K562 (cell line): ENCODE measurements at regions of chr15 and their contacts with region 1.

Region 1: GRCh38 chr15:90994417-90995311 is at the start of gene PRC1:
- DNase-seq: peak; percentile 98 to 99 (median 98)
- ATAC-seq: peak; percentile 94
- H3K4me3 ChIP-seq: peak within 1 kb of the TSS; percentile 91
- H3K27ac ChIP-seq: peak within 1 kb of the TSS; percentile 99
- H3K4me1 ChIP-seq: peaks cover 12 to 24% of the 10 kb centered on the region in 2 experiments; a peak in 3 of 5 replicates
- H3K27me3 ChIP-seq: no peaks in the 10 kb centered on the region
- CTCF ChIP-seq: peak in 1 of 3 experiments; percentile 5; a peak in 1 of 6 replicates
- EP300 ChIP-seq: no peak
- POLR2A ChIP-seq: peak; percentile 94
- RAD21 ChIP-seq: no peak
- polyA plus RNA-seq, gene PRC1: 156 to 240 TPM

Region 2: DNA sequence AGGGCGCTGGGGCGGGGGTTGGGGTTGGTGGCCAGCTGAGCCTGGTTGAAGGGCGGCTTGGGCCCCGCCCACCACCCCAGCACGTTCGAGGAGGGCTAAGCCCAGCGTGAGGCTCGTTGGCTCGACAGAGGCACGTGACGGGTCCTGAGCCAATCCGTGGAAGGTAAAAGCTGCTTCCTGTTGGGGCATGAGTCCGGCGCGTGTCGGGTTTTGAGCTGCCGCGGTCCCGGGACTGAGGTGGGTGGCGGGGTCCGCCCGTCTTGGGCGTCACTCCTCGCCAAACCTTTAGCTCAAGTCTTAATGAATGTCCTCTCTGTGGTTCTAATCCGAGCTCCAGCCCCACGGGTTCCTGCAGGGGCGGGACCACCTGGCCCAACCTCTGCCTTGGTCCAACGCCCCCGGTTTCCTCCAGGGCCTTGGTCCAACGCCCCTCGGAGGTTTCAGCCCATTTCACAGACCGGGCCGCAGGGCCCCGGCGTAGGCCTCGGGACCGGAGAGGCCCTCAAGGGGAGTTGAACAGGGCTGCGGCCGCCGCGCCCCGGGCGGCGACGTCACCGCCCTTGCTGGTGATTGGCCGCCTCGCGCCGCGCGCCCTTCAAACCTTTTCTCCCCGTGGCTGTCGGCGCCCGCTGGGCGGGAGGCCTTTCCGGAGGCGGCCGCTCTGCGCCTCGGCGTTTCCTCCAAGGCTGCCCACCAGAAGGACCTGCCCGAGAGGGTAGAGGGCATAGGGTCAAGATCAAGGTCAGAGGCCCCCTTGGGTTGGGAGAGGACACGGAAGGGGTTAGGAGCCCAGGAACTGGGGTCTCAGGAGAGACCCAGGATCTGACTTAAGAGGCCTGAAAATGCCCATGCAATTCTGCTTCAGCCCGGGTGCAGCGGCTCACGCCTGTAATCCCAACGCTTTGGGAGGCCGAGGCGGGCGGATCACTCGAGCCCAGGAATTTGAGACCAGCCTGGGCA is 39.7 kb before region 1 on chr15 and contains the start of gene RCCD1:
- CTCF ChIA-PET with region 1: no interaction called
- POLR2A ChIA-PET with region 1: interaction called, 4 read pairs
- in situ Hi-C with region 1: no loop called
- intact Hi-C with region 1: loop called (anchors 5 kb)
- DNase-seq: peak; percentile 97 to 98 (median 98)
- ATAC-seq: peak; percentile 96
- H3K4me3 ChIP-seq: peak within 1 kb of the TSS; percentile 50
- H3K27ac ChIP-seq: peak within 1 kb of the TSS; percentile 95
- H3K4me1 ChIP-seq: peaks cover 9 to 48% of the 10 kb centered on the region in 2 experiments; a peak in 4 of 5 replicates
- H3K27me3 ChIP-seq: no peaks in the 10 kb centered on the region
- CTCF ChIP-seq: no peak
- EP300 ChIP-seq: peak; percentile 21; the same call in 1 of the 2 replicates
- POLR2A ChIP-seq: peak; percentile 93
- RAD21 ChIP-seq: 0 out of 4 replicates have a peak, but pooled peaks of 1 of the 2 experiments have one; percentile 6
- polyA plus RNA-seq, gene RCCD1: 11.1 to 12.2 TPM

Region 3: GRCh38 chr15:91007266-91007665 is 12.6 kb after region 1 on chr15:
- CTCF ChIA-PET with region 1: no interaction called
- POLR2A ChIA-PET with region 1: interaction called, 15 read pairs
- in situ Hi-C with region 1: no loop called
- intact Hi-C with region 1: no loop called
- DNase-seq: no peak
- ATAC-seq: no peak
- H3K4me3 ChIP-seq: no peak overlapping the region
- H3K27ac ChIP-seq: no peak overlapping the region
- H3K4me1 ChIP-seq: peaks cover 9 to 20% of the 10 kb centered on the region in 2 experiments; a peak in 4 of 5 replicates
- H3K27me3 ChIP-seq: no peaks in the 10 kb centered on the region
- CTCF ChIP-seq: no peak
- EP300 ChIP-seq: no peak
- POLR2A ChIP-seq: no peak
- RAD21 ChIP-seq: no peak

Region 4: DNA sequence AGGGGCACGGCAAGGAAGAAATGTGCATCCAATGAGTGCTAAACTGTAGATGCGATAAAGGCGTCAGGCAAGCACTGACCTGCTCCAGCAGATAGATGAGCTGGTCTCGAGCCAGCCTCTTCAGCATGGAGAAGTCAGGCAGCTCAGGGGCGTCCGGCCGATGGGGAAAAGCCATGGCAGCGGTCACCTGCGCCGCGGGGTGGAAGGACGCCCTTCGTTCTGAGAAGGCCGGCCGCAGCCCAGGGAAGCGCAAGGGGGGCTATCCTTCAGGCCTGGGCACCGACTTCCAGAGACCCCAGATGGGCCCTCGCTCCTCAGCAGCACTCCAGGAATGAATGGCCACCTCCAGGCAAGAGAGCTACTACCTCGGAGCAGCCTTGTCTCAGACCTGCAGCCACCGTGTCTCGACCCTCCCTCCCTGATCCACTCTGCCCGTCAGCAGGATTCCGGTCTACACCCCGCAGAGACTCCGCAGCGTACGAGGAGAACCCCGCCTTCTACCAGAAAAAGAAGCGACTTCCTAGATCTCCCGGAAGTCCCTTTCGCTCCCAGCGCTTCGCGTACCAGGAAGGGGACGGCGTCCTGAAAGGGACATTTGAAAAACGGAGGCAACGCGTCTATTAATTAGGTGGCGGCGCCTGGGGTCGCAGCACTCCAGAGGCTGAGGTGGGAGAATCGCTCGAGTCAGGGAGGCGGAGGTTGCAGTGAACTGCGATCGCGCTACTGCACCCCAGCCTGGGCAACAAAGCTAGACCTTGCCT is 27.6 kb after region 1 on chr15 and contains the start of gene VPS33B:
- CTCF ChIA-PET with region 1: no interaction called
- POLR2A ChIA-PET with region 1: interaction called, 10 read pairs
- in situ Hi-C with region 1: no loop called
- intact Hi-C with region 1: no loop called
- DNase-seq: peak; percentile 80 to 93 (median 85)
- ATAC-seq: peak; percentile 87
- H3K4me3 ChIP-seq: peak within 1 kb of the TSS; percentile 78
- H3K27ac ChIP-seq: peak within 1 kb of the TSS; percentile 74
- H3K4me1 ChIP-seq: peaks cover 18 to 21% of the 10 kb centered on the region in 2 experiments; a peak in 4 of 5 replicates
- H3K27me3 ChIP-seq: no peaks in the 10 kb centered on the region
- CTCF ChIP-seq: no peak; a peak in 1 of 6 replicates
- EP300 ChIP-seq: no peak
- POLR2A ChIP-seq: peak; percentile 85
- RAD21 ChIP-seq: no peak
- polyA plus RNA-seq, gene VPS33B: 9.8 to 10.7 TPM

Region 5: DNA sequence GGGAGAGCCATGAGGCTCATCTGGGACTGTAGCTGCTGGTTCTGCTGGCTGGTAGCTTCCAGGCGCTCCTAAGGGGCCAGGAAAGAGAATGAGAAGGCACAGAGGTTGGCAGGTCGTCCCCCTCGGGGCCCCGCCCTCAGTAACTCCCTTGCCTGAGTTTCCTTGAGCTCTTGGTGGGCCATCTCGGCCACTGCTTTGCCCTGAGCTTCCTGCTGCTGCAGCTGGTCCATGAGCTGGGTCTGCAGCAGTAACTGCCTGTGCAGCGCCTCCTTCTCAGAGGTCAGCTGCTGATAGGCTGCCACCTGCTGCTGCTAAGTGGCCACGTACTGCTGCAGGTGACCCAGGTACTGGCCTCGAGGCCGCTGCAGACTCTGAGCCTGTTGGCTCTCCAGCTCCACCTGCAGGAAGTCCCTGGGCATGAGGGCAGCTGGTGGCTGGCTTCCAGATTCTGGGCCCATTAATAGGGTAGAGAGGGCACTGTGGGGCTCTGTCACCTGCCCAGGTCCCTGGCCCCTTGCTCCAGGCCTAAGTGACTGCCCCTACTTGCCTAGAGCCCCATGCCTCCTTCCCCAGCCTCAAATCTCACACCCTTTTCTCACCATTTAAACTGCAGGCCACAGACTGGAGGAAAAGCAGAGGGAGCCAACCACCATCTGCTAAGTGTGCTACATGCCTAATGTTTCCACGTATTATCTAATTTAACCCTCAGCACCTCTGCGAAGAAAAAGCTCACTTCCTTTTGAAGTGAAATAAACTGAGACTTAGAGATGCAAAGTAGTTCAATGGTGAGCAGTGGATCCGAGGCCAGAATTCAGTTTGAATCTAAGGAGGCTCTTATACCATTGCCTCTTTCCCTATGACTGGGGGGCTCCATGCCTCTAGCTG is 38.5 kb after region 1 on chr15:
- CTCF ChIA-PET with region 1: no interaction called
- POLR2A ChIA-PET with region 1: interaction called, 3 read pairs
- in situ Hi-C with region 1: no loop called
- intact Hi-C with region 1: loop called (anchors 2 kb)
- DNase-seq: peak; percentile 68 to 84 (median 74)
- ATAC-seq: peak; percentile 92
- H3K4me3 ChIP-seq: no peak overlapping the region
- H3K27ac ChIP-seq: no peak overlapping the region
- H3K4me1 ChIP-seq: peaks cover 0 to 22% of the 10 kb centered on the region in 2 experiments; a peak in 3 of 5 replicates
- H3K27me3 ChIP-seq: peaks cover 2 to 4% of the 10 kb centered on the region in 2 experiments; a peak in 3 of 5 replicates
- CTCF ChIP-seq: peak; percentile 85 to 90 (median 90)
- EP300 ChIP-seq: no peak
- POLR2A ChIP-seq: no peak
- RAD21 ChIP-seq: peak; percentile 68 to 90

Region 6: GRCh38 chr15:91049378-91050127 is 54.9 kb after region 1 on chr15:
- CTCF ChIA-PET with region 1: no interaction called
- POLR2A ChIA-PET with region 1: interaction called, 3 read pairs
- in situ Hi-C with region 1: no loop called
- intact Hi-C with region 1: loop called (anchors 5 kb)
- DNase-seq: peak; percentile 25 to 79 (median 45)
- ATAC-seq: peak; percentile 97
- H3K4me3 ChIP-seq: no peak overlapping the region
- H3K27ac ChIP-seq: no peak overlapping the region
- H3K4me1 ChIP-seq: peaks cover 0 to 10% of the 10 kb centered on the region in 2 experiments; a peak in 3 of 5 replicates
- H3K27me3 ChIP-seq: peaks cover 5 to 12% of the 10 kb centered on the region in 2 experiments; a peak in 4 of 5 replicates
- CTCF ChIP-seq: peak; percentile 75 to 84 (median 81)
- EP300 ChIP-seq: no peak
- POLR2A ChIP-seq: no peak
- RAD21 ChIP-seq: peak; percentile 85 to 88

Region 7: DNA sequence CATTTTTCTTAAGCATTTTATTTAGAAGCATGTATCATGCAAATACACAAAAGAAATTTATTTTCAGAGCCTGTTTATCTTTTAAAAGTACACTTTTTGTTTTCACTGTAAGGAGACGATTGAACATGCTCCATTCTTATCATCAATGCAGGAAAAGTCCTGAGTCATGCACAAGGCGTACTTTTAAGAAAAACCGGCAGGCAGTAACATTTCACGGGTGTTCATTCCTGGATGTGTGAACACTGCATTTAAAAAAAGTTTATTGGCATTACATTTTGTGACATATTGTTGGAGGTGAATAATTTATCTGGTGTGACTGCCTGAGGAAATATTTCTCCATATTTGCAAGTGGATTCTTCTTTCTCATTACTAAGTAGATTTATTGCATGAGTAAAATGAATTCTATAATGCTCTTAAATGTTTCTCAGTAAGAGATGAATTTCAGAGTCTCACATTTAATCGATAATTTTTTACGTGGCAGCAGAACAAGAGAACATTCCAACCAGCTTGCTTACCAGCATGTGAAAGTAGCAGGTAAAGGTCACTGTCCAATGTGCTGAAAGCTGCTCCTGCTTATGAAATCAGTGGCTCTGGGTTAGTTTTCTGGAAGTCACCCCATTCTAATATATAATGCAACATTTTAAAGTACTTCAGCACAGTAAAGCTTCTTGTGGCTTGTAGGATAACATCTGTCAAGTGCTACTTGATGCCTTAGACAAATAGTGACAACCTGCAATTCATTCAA is 192.4 kb after region 1 on chr15:
- CTCF ChIA-PET with region 1: no interaction called
- POLR2A ChIA-PET with region 1: no interaction called
- in situ Hi-C with region 1: no loop called
- intact Hi-C with region 1: no loop called
- DNase-seq: peak in 1 of 4 experiments; percentile 45
- ATAC-seq: no peak
- H3K4me3 ChIP-seq: no peak overlapping the region
- H3K27ac ChIP-seq: no peak overlapping the region
- H3K4me1 ChIP-seq: no peaks in the 10 kb centered on the region
- H3K27me3 ChIP-seq: no peaks in the 10 kb centered on the region
- CTCF ChIP-seq: no peak
- EP300 ChIP-seq: no peak
- POLR2A ChIP-seq: no peak
- RAD21 ChIP-seq: no peak

Region 8: GRCh38 chr15:91357011-91357410 is 362.3 kb after region 1 on chr15:
- CTCF ChIA-PET with region 1: no interaction called
- POLR2A ChIA-PET with region 1: no interaction called
- in situ Hi-C with region 1: no loop called
- intact Hi-C with region 1: no loop called
- DNase-seq: no peak
- ATAC-seq: no peak
- H3K4me3 ChIP-seq: no peak overlapping the region
- H3K27ac ChIP-seq: no peak overlapping the region
- H3K4me1 ChIP-seq: no peaks in the 10 kb centered on the region
- H3K27me3 ChIP-seq: peaks cover 0 to 5% of the 10 kb centered on the region in 2 experiments; a peak in 1 of 5 replicates
- CTCF ChIP-seq: no peak
- EP300 ChIP-seq: no peak
- POLR2A ChIP-seq: no peak
- RAD21 ChIP-seq: no peak